Natural killer cell (primary cell): ENCODE measurements at regions of chr15 and their contacts with region 1.

Region 1: GRCh38 chr15:52679232-52680040 is at the start of gene ATOSA:
- DNase-seq: peak; percentile 89 to 95
- ATAC-seq: peak; percentile 69 to 90 (median 86)
- H3K4me3 ChIP-seq: peak within 1 kb of the TSS; percentile 93
- H3K4me3 Mint-ChIP-seq: peak within 1 kb of the TSS; percentile 99
- H3K27ac ChIP-seq: peak within 1 kb of the TSS; percentile 98
- H3K27ac Mint-ChIP-seq: peak within 1 kb of the TSS; percentile 97
- H3K4me1 ChIP-seq: peaks cover 17% of the 10 kb centered on the region
- H3K4me1 Mint-ChIP-seq: peaks cover 44 to 56% of the 10 kb centered on the region in 2 donors
- H3K27me3 ChIP-seq: no peaks in the 10 kb centered on the region
- H3K27me3 Mint-ChIP-seq: no peaks in the 10 kb centered on the region
- CTCF ChIP-seq: no peak
- total RNA-seq, gene ATOSA: 107 to 127 (median 114) TPM

Region 2: GRCh38 chr15:52568601-52569256 is 110.7 kb before region 1 on chr15 and contains the start of gene ARPP19:
- intact Hi-C with region 1: loop called (anchors 2 kb)
- DNase-seq: peak; percentile 65 to 88
- ATAC-seq: peak; percentile 71 to 79 (median 79)
- H3K4me3 ChIP-seq: peak within 1 kb of the TSS; percentile 42
- H3K4me3 Mint-ChIP-seq: peak within 1 kb of the TSS; percentile 94
- H3K27ac ChIP-seq: peak within 1 kb of the TSS; percentile 85
- H3K27ac Mint-ChIP-seq: peak within 1 kb of the TSS; percentile 90 to 97
- H3K4me1 ChIP-seq: peaks cover 24% of the 10 kb centered on the region
- H3K4me1 Mint-ChIP-seq: peaks cover 32% of the 10 kb centered on the region in 2 donors
- H3K27me3 ChIP-seq: no peaks in the 10 kb centered on the region
- H3K27me3 Mint-ChIP-seq: no peaks in the 10 kb centered on the region
- CTCF ChIP-seq: no peak
- total RNA-seq, gene ARPP19: 110 to 147 (median 121) TPM